ENCODE measurements at regions of chr3 and their contacts with region 1.

Region 1: DNA sequence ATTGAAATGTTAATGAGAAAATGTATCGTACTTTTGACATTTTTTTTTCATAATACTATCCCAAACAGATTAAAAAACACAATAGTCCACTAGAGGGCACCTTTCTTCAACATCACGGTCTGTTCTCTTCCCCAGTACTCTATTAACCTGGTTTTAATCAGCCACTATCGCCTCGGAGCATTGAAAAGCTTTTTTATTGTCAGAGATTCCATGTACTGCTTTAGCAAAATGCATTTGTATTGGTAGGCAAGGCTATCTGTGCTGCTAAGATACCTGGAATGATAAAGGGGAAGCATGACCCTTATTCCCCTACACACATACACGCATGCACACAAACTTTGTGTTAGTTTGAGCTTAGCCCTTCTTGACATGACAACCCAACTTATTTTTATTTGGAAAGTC is 160.1 kb upstream of the IL12A start:
- DNase-seq: no peak
- ATAC-seq: peak; percentile 82
- H3K4me3 ChIP-seq: no peak overlapping the region
- H3K27ac ChIP-seq: no peak overlapping the region
- H3K4me1 ChIP-seq: peaks cover 13% of the 10 kb centered on the region
- H3K27me3 ChIP-seq: no peaks in the 10 kb centered on the region
- CTCF ChIP-seq: peak; percentile 41 to 52 (median 49); a peak in 5 of 6 replicates
- EP300 ChIP-seq: no peak
- POLR2A ChIP-seq: no peak
- RAD21 ChIP-seq: peak; percentile 55

Region 2: GRCh38 chr3:159685801-159686200 is 142.7 kb before region 1 on chr3:
- CTCF ChIA-PET with region 1: no interaction called
- POLR2A ChIA-PET with region 1: no interaction called
- RAD21 ChIA-PET with region 1: no interaction called
- SMC1A ChIA-PET with region 1: no interaction called
- in situ Hi-C with region 1: no loop called
- intact Hi-C with region 1: no loop called
- DNase-seq: no peak
- ATAC-seq: no peak
- H3K4me3 ChIP-seq: no peak overlapping the region
- H3K27ac ChIP-seq: no peak overlapping the region
- H3K4me1 ChIP-seq: no peaks in the 10 kb centered on the region
- H3K27me3 ChIP-seq: no peaks in the 10 kb centered on the region
- CTCF ChIP-seq: no peak
- EP300 ChIP-seq: no peak
- POLR2A ChIP-seq: no peak
- RAD21 ChIP-seq: no peak

Region 3: DNA sequence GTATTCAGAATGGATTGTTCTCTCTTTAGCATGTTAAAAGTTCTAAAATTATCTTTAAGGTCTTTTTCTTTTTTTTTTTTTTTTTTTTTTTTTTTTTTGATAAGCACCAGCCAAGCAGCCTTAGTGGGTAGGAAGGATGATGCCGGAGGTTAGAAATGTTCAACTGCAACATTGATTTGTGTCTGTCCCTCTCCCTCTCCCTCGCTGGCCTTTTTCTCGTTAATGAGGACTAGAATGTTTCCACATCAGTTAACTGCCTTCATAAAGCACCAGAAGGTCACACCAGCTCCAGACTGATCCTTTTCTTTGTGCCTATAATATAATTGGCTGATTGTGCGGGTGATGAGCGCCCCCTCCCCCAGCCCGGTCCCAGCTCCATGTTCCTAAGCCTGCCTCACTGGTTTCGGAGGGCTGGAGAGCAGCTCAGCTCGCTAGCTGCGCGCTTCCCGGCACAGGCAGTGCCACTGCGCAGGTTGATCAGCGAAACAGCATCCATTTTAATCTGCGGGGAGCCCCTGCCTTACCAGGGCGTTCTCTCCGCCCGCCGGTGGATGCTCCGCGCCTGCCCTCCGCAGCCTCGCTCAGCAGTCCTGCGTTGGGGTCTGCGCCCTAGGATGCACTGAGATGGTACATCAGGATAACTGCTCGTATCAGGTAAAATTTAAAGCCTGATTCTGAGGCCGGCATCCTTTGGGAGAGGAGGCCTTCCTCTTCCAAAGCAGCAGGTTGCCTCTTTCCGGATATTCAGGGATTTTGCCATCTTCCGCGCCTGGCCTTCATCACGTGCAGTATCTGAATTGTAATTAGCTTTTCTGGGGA is 11.2 kb after region 1 on chr3:
- CTCF ChIA-PET with region 1: interaction called, 7 read pairs
- POLR2A ChIA-PET with region 1: no interaction called
- RAD21 ChIA-PET with region 1: no interaction called
- SMC1A ChIA-PET with region 1: interaction called, 11 read pairs
- in situ Hi-C with region 1: no loop called
- intact Hi-C with region 1: no loop called
- DNase-seq: no peak
- ATAC-seq: peak; percentile 32
- H3K4me3 ChIP-seq: peak within 1 kb of the TSS; percentile 55
- H3K27ac ChIP-seq: no peak within 1 kb of the TSS
- H3K4me1 ChIP-seq: no peaks in the 10 kb centered on the region
- H3K27me3 ChIP-seq: no peaks in the 10 kb centered on the region; a peak in 2 of 4 replicates
- CTCF ChIP-seq: no peak
- EP300 ChIP-seq: no peak
- POLR2A ChIP-seq: no peak
- RAD21 ChIP-seq: no peak